Heart right ventricle (tissue), 16 donors: ENCODE measurements at regions of chr7 and their contacts with region 1.

Region 1: DNA sequence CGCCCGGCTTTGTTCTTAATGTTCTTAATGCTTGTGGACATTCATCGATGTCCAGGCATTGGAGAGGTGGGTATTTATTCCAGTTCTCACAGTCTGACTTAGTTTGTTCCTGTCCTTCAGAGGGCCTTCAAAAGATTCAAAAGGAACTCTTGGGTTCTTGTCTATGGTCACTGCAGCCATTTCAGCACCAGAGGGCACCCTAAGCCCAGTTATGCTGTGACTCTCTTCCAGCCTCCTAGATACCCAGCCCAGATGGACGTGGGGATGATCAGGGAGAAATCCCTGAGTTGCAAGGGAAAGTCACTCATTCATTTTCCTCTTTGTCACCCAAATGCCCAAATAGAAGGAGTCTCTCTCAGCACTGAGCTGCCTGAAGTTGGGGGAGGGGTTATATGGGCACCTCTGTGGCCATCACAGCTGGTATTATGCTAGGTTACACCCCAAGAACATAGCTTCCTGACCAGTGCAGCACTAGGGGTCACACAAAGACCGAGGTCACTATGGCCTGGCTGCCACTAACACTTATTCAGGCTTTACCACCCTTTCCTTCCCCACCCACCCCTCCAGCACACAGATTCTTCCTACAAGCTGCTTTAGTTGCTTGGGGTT is 26.5 kb upstream of the CCDC126 start:
- DNase-seq: peak; percentile 59 to 72
- ATAC-seq: peak; percentile 77 to 97 (median 93)
- H3K4me3 ChIP-seq: no peak overlapping the region
- H3K27ac ChIP-seq: no peak overlapping the region
- H3K4me1 ChIP-seq: no peaks in the 10 kb centered on the region
- H3K27me3 ChIP-seq: peaks cover 0 to 35% (median 2%) of the 10 kb centered on the region in 7 donors
- CTCF ChIP-seq: peak; percentile 62 to 93 (median 83)

Region 2: GRCh38 chr7:23531794-23532489 is 38.8 kb before region 1 on chr7 and contains the start of gene TRA2A:
- intact Hi-C with region 1: no loop called
- DNase-seq: peak; percentile 97 to 98
- ATAC-seq: peak; percentile 99
- H3K4me3 ChIP-seq: peak within 1 kb of the TSS; percentile 60 to 98 (median 87)
- H3K27ac ChIP-seq: peak within 1 kb of the TSS; percentile 81 to 98 (median 96)
- H3K4me1 ChIP-seq: peaks cover 0 to 41% (median 37%) of the 10 kb centered on the region in 9 donors
- H3K27me3 ChIP-seq: no peaks in the 10 kb centered on the region
- CTCF ChIP-seq: no peak
- total RNA-seq, gene TRA2A: 26.9 to 38.3 (median 31.2) TPM

Region 3: GRCh38 chr7:23712368-23713284 is 141.9 kb after region 1 on chr7:
- intact Hi-C with region 1: loop called (anchors 1 to 5 kb)
- DNase-seq: no peak
- ATAC-seq: peak in 2 of 8 donors; percentile 42 to 71
- H3K4me3 ChIP-seq: no peak overlapping the region
- H3K27ac ChIP-seq: no peak overlapping the region
- H3K4me1 ChIP-seq: no peaks in the 10 kb centered on the region
- H3K27me3 ChIP-seq: no peaks in the 10 kb centered on the region
- CTCF ChIP-seq: peak; percentile 47 to 81 (median 64)

Region 4: DNA sequence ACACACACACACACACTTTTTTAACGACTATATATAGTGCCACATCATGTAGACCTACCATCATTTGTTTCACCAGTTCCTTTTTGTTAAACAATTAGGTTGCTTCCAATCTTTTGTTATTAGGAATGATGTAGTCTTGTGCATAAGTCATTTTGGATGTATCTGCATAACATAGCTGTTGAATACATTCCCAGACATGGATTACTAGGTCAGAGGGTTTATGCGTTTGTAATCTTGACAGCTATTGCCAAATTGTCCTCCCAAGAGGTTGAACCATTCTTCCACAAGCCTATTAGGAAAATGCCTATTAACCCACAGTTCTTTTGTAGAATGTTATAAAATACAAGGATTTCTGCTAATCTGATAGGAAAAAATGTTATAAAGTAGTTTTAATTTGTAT is 1089.8 kb after region 1 on chr7:
- intact Hi-C with region 1: loop called in 6 of 10 experiments (anchors 2 to 10 kb)
- DNase-seq: no peak
- ATAC-seq: no peak
- H3K4me3 ChIP-seq: no peak overlapping the region
- H3K27ac ChIP-seq: no peak overlapping the region
- H3K4me1 ChIP-seq: no peaks in the 10 kb centered on the region
- H3K27me3 ChIP-seq: no peaks in the 10 kb centered on the region
- CTCF ChIP-seq: no peak

Region 5: GRCh38 chr7:24665564-24666294 is 1095.0 kb after region 1 on chr7:
- intact Hi-C with region 1: loop called in 6 of 10 experiments (anchors 2 to 10 kb)
- DNase-seq: peak in 1 of 2 donors; percentile 24
- ATAC-seq: peak in 1 of 8 donors; percentile 29
- H3K4me3 ChIP-seq: no peak overlapping the region
- H3K27ac ChIP-seq: no peak overlapping the region
- H3K4me1 ChIP-seq: peaks cover 0 to 16% (median 0%) of the 10 kb centered on the region in 9 donors
- H3K27me3 ChIP-seq: no peaks in the 10 kb centered on the region
- CTCF ChIP-seq: peak; percentile 34 to 76 (median 68)